A673 (cell line): ENCODE measurements at regions of chr13 and their contacts with region 1.

Region 1: GRCh38 chr13:81017513-81018152 is 676.7 kb upstream of the SPRY2 start:
- DNase-seq: peak; percentile 62
- H3K4me3 ChIP-seq: no peak overlapping the region
- H3K27ac ChIP-seq: no peak overlapping the region
- H3K4me1 ChIP-seq: no peaks in the 10 kb centered on the region
- H3K27me3 ChIP-seq: no peaks in the 10 kb centered on the region
- CTCF ChIP-seq: peak; percentile 72

Region 2: DNA sequence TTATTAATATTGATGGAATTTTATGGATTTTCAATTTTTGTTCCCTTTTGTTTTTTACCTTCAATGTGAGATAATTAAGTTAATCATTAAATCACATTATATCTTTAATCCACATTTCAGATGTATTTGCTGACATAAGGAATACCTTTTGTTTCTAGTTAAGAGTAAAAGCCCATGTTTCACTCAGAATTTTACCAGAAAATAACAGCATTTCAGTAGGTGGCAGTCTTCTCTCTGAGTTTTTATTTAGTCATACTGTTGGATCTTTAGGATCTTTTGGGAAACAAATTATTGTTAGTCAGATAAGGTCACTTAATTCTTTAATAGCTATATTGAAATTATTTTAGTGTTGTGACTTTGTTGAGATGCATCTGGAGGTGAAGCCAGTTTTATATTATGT is 1468.7 kb before region 1 on chr13:
- CTCF ChIA-PET with region 1: no interaction called
- POLR2A ChIA-PET with region 1: no interaction called
- intact Hi-C with region 1: loop called (anchors 5 kb)
- DNase-seq: peak; percentile 24
- H3K4me3 ChIP-seq: no peak overlapping the region
- H3K27ac ChIP-seq: no peak overlapping the region
- H3K4me1 ChIP-seq: no peaks in the 10 kb centered on the region
- H3K27me3 ChIP-seq: no peaks in the 10 kb centered on the region
- CTCF ChIP-seq: peak; percentile 65

Region 3: DNA sequence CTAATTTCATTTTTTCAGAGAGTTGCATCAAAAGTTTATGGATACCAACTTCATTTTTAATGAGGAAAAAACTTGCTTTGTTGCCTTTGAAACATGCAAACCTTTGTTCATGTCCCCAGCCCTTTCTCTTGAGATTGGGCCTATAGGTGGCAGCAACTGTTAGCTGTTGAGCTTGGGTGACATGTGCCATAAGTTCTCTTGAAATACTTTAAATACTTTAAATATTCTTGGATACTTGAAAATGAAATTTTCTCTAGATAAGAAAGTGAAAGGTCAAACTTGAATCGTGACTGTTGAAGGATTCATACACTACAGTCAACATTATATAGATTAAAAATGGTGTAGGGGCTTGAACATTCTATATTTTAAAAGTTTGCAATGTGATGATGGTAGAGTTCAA is 1241.8 kb before region 1 on chr13:
- CTCF ChIA-PET with region 1: no interaction called
- POLR2A ChIA-PET with region 1: no interaction called
- intact Hi-C with region 1: loop called (anchors 10 kb)
- DNase-seq: peak; percentile 79
- H3K4me3 ChIP-seq: no peak overlapping the region
- H3K27ac ChIP-seq: no peak overlapping the region
- H3K4me1 ChIP-seq: peaks cover 22% of the 10 kb centered on the region
- H3K27me3 ChIP-seq: no peaks in the 10 kb centered on the region
- CTCF ChIP-seq: peak; percentile 83

Region 4: GRCh38 chr13:80798576-80799133 is 219.0 kb before region 1 on chr13:
- CTCF ChIA-PET with region 1: no interaction called
- POLR2A ChIA-PET with region 1: no interaction called
- intact Hi-C with region 1: no loop called
- DNase-seq: no peak
- H3K4me3 ChIP-seq: no peak overlapping the region
- H3K27ac ChIP-seq: no peak overlapping the region
- H3K4me1 ChIP-seq: no peaks in the 10 kb centered on the region
- H3K27me3 ChIP-seq: no peaks in the 10 kb centered on the region
- CTCF ChIP-seq: no peak

Region 5: DNA sequence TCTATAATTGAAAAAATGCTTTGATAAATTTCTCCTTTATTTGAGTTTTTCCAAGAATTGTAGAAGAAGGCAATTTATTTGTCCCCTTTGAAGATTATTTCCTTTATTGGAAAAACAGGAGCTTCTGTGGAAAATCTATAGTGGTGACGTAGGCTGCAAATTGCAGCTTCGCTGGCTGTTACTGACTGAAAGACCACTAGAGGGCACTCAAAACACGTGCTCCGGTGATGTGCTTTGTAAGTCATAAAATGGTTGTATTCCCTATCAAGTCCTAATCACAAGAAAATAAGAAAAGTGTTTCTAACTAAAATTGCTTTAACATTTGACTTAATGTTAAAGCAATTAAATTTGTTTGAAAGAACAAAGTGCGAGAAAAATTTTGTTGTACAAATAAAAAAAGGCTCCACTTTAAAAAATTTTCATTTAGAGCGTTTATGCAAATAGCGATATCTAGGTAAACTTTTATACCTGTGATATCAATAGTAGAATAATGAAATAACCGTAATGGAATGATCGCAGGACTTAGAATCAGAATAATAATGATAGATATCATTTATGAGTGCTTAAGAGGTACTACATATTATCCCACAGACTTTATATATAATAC is 38.5 kb before region 1 on chr13:
- CTCF ChIA-PET with region 1: interaction called, 5 read pairs
- POLR2A ChIA-PET with region 1: no interaction called
- intact Hi-C with region 1: loop called (anchors 1 kb)
- DNase-seq: peak; percentile 77
- H3K4me3 ChIP-seq: no peak overlapping the region
- H3K27ac ChIP-seq: no peak overlapping the region
- H3K4me1 ChIP-seq: no peaks in the 10 kb centered on the region
- H3K27me3 ChIP-seq: no peaks in the 10 kb centered on the region
- CTCF ChIP-seq: peak; percentile 88

Region 6: GRCh38 chr13:80989241-80989640 is 28.4 kb before region 1 on chr13:
- CTCF ChIA-PET with region 1: no interaction called
- POLR2A ChIA-PET with region 1: no interaction called
- intact Hi-C with region 1: no loop called
- DNase-seq: no peak
- H3K4me3 ChIP-seq: no peak overlapping the region
- H3K27ac ChIP-seq: no peak overlapping the region
- H3K4me1 ChIP-seq: no peaks in the 10 kb centered on the region
- H3K27me3 ChIP-seq: no peaks in the 10 kb centered on the region
- CTCF ChIP-seq: no peak